Left cardiac atrium (tissue), 4 donors: ENCODE measurements at regions of chr10 and their contacts with region 1.

Region 1: DNA sequence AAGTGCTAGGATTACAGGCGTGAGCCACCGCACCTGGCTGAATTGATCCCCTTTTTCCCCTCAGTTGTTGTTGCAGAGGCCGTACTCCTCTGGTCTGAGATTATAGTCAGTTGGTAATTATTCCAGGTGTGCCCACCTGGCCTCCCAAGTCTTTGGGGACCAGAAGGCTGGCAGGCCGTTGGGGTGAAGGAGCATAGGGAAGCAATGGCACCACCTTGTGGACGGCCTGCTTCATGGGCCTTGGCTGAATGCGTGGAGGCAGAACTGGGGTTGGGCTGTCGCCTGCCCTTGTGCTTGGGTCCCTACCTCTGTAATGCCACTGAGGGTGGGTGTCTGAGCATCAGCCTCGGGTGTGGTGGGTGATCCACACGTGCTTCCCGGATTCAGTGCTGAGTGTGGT is 125.7 kb downstream of the RGS10 start:
- DNase-seq: peak; percentile 75
- ATAC-seq: peak in 1 of 2 donors; percentile 16

Region 2: GRCh38 chr10:119270762-119271366 is 146.0 kb before region 1 on chr10:
- intact Hi-C with region 1: loop called in 1 of 2 experiments (anchors 10 kb)
- DNase-seq: peak; percentile 94
- ATAC-seq: peak; percentile 81 to 87

Region 3: GRCh38 chr10:119449760-119450461 is 33.1 kb after region 1 on chr10:
- intact Hi-C with region 1: no loop called
- DNase-seq: peak; percentile 77
- ATAC-seq: peak; percentile 8 to 59